CD8-positive, alpha-beta T cell (primary cell): ENCODE measurements at regions of chr17 and their contacts with region 1.

Region 1: GRCh38 chr17:55053855-55054254 is 85.3 kb downstream of the STXBP4 start:
- DNase-seq: no peak
- ATAC-seq: no peak
- H3K4me3 ChIP-seq: no peak overlapping the region
- H3K4me3 Mint-ChIP-seq: no peak overlapping the region
- H3K27ac ChIP-seq: no peak overlapping the region
- H3K27ac Mint-ChIP-seq: no peak overlapping the region
- H3K4me1 ChIP-seq: no peaks in the 10 kb centered on the region
- H3K4me1 Mint-ChIP-seq: no peaks in the 10 kb centered on the region
- H3K27me3 ChIP-seq: no peaks in the 10 kb centered on the region
- H3K27me3 Mint-ChIP-seq: no peaks in the 10 kb centered on the region
- CTCF ChIP-seq: no peak

Region 2: GRCh38 chr17:55295411-55296170 is 241.7 kb after region 1 on chr17:
- CTCF ChIA-PET with region 1: interaction called, 3 read pairs
- POLR2A ChIA-PET with region 1: no interaction called
- intact Hi-C with region 1: loop called in 1 of 2 experiments (anchors 5 kb)
- DNase-seq: peak; percentile 20 to 70 (median 50)
- ATAC-seq: peak; percentile 57
- H3K4me3 ChIP-seq: no peak overlapping the region
- H3K4me3 Mint-ChIP-seq: no peak overlapping the region
- H3K27ac ChIP-seq: no peak overlapping the region
- H3K27ac Mint-ChIP-seq: no peak overlapping the region
- H3K4me1 ChIP-seq: no peaks in the 10 kb centered on the region
- H3K4me1 Mint-ChIP-seq: no peaks in the 10 kb centered on the region
- H3K27me3 ChIP-seq: no peaks in the 10 kb centered on the region
- H3K27me3 Mint-ChIP-seq: peaks cover 3% of the 10 kb centered on the region
- CTCF ChIP-seq: peak; percentile 88